Prostate gland (tissue), 2 donors: ENCODE measurements at regions of chr3 and their contacts with region 1.

Region 1: GRCh38 chr3:29537889-29538609 is 257.2 kb downstream of the RBMS3 start:
- DNase-seq: no peak
- H3K4me3 ChIP-seq: no peak overlapping the region
- H3K27ac ChIP-seq: no peak overlapping the region
- H3K4me1 ChIP-seq: no peaks in the 10 kb centered on the region
- H3K27me3 ChIP-seq: no peaks in the 10 kb centered on the region
- CTCF ChIP-seq: no peak
- POLR2A ChIP-seq: no peak

Region 2: GRCh38 chr3:29649815-29650547 is 111.9 kb after region 1 on chr3:
- intact Hi-C with region 1: loop called (anchors 10 kb)
- DNase-seq: no peak
- H3K4me3 ChIP-seq: no peak overlapping the region
- H3K27ac ChIP-seq: no peak overlapping the region
- H3K4me1 ChIP-seq: no peaks in the 10 kb centered on the region
- H3K27me3 ChIP-seq: no peaks in the 10 kb centered on the region
- CTCF ChIP-seq: no peak
- POLR2A ChIP-seq: no peak